Panc1 (cell line): ENCODE measurements at regions of chr1 and their contacts with region 1.

Region 1: GRCh38 chr1:77193951-77194350 is 25.3 kb downstream of the PIGK start:
- DNase-seq: no peak
- ATAC-seq: no peak
- H3K4me3 ChIP-seq: no peak overlapping the region
- H3K27ac ChIP-seq: no peak overlapping the region
- H3K4me1 ChIP-seq: no peaks in the 10 kb centered on the region
- H3K27me3 ChIP-seq: no peaks in the 10 kb centered on the region
- CTCF ChIP-seq: no peak

Region 2: GRCh38 chr1:77557053-77557452 is 363.1 kb after region 1 on chr1:
- CTCF ChIA-PET with region 1: no interaction called
- POLR2A ChIA-PET with region 1: interaction called, 13 read pairs
- in situ Hi-C with region 1: no loop called
- intact Hi-C with region 1: no loop called
- DNase-seq: no peak
- ATAC-seq: no peak
- H3K4me3 ChIP-seq: no peak overlapping the region
- H3K27ac ChIP-seq: no peak overlapping the region
- H3K4me1 ChIP-seq: no peaks in the 10 kb centered on the region
- H3K27me3 ChIP-seq: no peaks in the 10 kb centered on the region
- CTCF ChIP-seq: no peak